Calu3 (cell line): ENCODE measurements at regions of chr4 and their contacts with region 1.

Region 1: DNA sequence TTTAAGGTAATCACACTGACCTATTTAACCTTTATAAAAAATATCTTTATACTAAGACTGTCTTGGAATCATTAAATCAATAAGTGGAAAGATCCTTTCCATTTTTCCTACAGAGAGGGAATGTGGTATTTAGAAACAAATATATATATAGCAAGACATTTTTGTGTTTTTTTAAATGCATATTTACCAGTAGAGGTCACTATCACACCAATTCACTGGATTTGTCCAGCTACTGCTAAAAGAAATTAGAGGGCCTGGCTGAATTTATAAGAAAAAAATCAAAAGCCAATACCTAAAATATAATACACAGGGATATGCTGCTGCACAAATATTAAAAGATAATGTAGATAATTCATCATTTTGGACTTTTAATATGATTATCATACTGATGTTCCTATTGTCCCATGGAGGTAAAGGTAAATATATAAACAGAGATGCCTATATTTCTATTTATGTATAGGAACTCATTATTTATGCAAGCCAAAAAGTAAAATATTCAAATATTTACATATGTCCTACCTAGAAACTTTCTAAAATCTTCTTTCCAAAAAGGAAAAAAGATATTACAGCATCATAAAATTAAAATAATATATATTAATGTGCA is 69.5 kb downstream of the PDE5A start:
- DNase-seq: no peak
- H3K4me3 Mint-ChIP-seq: no peak overlapping the region
- H3K27ac Mint-ChIP-seq: no peak overlapping the region
- H3K4me1 Mint-ChIP-seq: no peaks in the 10 kb centered on the region
- H3K27me3 Mint-ChIP-seq: no peaks in the 10 kb centered on the region
- CTCF ChIP-seq: no peak

Region 2: DNA sequence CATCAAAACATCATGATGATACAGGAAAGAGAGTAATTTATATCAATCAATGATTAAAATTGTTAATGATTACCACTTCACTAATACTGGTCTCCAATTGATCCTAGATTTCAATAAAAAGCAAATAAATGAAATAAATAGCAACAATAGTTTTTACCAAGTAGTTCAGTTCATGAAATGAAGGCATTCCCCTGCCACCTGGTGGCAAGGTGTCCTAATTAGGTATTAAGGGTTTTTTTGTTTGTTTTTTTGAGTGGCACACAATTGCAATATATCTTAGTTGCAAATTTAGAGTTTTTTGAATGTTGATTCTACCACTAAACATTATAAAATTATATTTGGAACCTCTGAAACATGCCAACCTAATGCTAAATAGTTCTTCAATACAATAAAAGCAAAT is 226.8 kb after region 1 on chr4:
- CTCF ChIA-PET with region 1: no interaction called
- intact Hi-C with region 1: loop called (anchors 2 kb)
- DNase-seq: peak; percentile 42
- H3K4me3 Mint-ChIP-seq: no peak overlapping the region
- H3K27ac Mint-ChIP-seq: no peak overlapping the region
- H3K4me1 Mint-ChIP-seq: no peaks in the 10 kb centered on the region
- H3K27me3 Mint-ChIP-seq: no peaks in the 10 kb centered on the region
- CTCF ChIP-seq: peak; percentile 54